ENCODE measurements at regions of chr2 and their contacts with region 1.

Region 1: DNA sequence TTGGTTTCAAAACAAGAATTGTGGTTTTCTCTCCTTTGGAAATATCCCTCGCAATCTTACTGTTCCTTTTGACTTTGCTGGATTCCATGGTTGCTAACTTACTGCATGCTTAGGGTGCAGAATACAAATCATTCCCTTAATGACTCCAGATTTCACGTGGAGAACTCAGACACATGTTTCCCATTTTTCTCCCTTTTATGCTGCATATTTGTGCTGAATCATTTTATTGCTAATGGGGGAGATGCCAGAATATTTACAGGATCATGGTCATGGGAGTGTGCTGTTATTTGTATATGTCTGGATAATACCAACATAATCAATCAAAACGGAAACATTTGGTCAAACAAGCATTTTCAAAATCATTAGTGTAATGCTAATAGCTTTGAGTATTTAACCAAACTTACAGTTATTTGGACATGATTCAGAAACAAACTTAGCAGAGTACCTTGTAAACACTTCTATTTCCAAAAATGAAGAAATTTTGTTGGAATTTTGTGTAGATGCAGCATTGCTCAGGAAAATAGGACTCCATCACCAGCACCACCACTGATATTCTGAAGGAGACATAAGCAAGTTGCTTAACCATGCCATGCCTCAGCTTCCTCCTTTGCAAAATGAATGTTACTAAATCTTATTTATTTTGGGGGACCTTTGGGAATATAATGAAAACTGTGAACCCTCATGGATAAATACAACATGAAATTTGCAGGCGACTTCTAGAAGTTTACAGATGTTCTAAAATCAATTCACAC is 122.5 kb upstream of the RND3 start:
- DNase-seq: no peak
- H3K4me3 ChIP-seq: no peak overlapping the region
- H3K27ac ChIP-seq: no peak overlapping the region
- H3K27me3 ChIP-seq: peaks cover 0 to 11% (median 0%) of the 10 kb centered on the region in 45 donors
- CTCF ChIP-seq: no peak

Region 2: GRCh38 chr2:150643114-150643725 is 33.2 kb after region 1 on chr2:
- intact Hi-C with region 1: loop called in 1 of 2 experiments (anchors 2 kb)
- DNase-seq: no peak
- H3K4me3 ChIP-seq: no peak overlapping the region
- H3K27ac ChIP-seq: no peak overlapping the region
- H3K27me3 ChIP-seq: peaks cover 0 to 9% (median 0%) of the 10 kb centered on the region in 45 donors
- CTCF ChIP-seq: no peak